ENCODE measurements at regions of chr2 and their contacts with region 1.

Region 1: GRCh38 chr2:46299365-46300263 is 2.4 kb downstream of the EPAS1 start:
- DNase-seq: peak; percentile 73 to 76 (median 74)
- ATAC-seq: peak; percentile 9
- H3K4me3 ChIP-seq: peak overlapping the region; percentile 76
- H3K4me1 ChIP-seq: peaks cover 39% of the 10 kb centered on the region
- CTCF ChIP-seq: no peak

Region 2: GRCh38 chr2:46351750-46352138 is 52.1 kb after region 1 on chr2:
- intact Hi-C with region 1: loop called in 1 of 2 experiments (anchors 10 kb)
- DNase-seq: peak; percentile 60 to 80 (median 62)
- ATAC-seq: peak; percentile 77
- H3K4me3 ChIP-seq: no peak overlapping the region
- H3K4me1 ChIP-seq: no peaks in the 10 kb centered on the region
- CTCF ChIP-seq: no peak

Region 3: GRCh38 chr2:46461011-46461674 is 161.5 kb after region 1 on chr2:
- intact Hi-C with region 1: no loop called
- DNase-seq: peak; percentile 70 to 90 (median 87)
- ATAC-seq: peak; percentile 83
- H3K4me3 ChIP-seq: no peak overlapping the region
- H3K4me1 ChIP-seq: peaks cover 4% of the 10 kb centered on the region
- CTCF ChIP-seq: peak; percentile 98

Measured in mucosa of descending colon (tissue), 3 donors.